Naive thymus-derived CD4-positive, alpha-beta T cell (primary cell): ENCODE measurements at regions of chr14 and their contacts with region 1.

Region 1: GRCh38 chr14:50860478-50861086 is 11.3 kb upstream of the ABHD12B start:
- DNase-seq: peak; percentile 80 to 90 (median 86)
- ATAC-seq: peak; percentile 90
- H3K4me3 ChIP-seq: peak overlapping the region; percentile 84
- H3K4me3 Mint-ChIP-seq: peak overlapping the region; percentile 89 to 95 (median 92)
- H3K27ac ChIP-seq: peak overlapping the region; percentile 56
- H3K27ac Mint-ChIP-seq: peak overlapping the region; percentile 83 to 95 (median 88)
- H3K4me1 ChIP-seq: peaks cover 7% of the 10 kb centered on the region in 2 donors
- H3K4me1 Mint-ChIP-seq: peaks cover 3 to 23% (median 11%) of the 10 kb centered on the region in 7 donors
- H3K27me3 ChIP-seq: no peaks in the 10 kb centered on the region
- H3K27me3 Mint-ChIP-seq: peaks cover 0 to 33% (median 2%) of the 10 kb centered on the region in 5 donors

Region 2: GRCh38 chr14:50321009-50321660 is 539.4 kb before region 1 on chr14:
- CTCF ChIA-PET with region 1: interaction called, 5 read pairs
- POLR2A ChIA-PET with region 1: no interaction called
- intact Hi-C with region 1: loop called (anchors 1 to 2 kb)
- DNase-seq: peak in 8 of 9 donors; percentile 52 to 83 (median 76)
- ATAC-seq: peak; percentile 99
- H3K4me3 ChIP-seq: peak overlapping the region; percentile 15
- H3K4me3 Mint-ChIP-seq: no peak overlapping the region
- H3K27ac ChIP-seq: peak overlapping the region; percentile 11
- H3K27ac Mint-ChIP-seq: no peak overlapping the region
- H3K4me1 ChIP-seq: peaks cover 0 to 4% of the 10 kb centered on the region in 2 donors
- H3K4me1 Mint-ChIP-seq: peaks cover 8 to 34% (median 27%) of the 10 kb centered on the region in 7 donors
- H3K27me3 ChIP-seq: no peaks in the 10 kb centered on the region
- H3K27me3 Mint-ChIP-seq: no peaks in the 10 kb centered on the region

Region 3: DNA sequence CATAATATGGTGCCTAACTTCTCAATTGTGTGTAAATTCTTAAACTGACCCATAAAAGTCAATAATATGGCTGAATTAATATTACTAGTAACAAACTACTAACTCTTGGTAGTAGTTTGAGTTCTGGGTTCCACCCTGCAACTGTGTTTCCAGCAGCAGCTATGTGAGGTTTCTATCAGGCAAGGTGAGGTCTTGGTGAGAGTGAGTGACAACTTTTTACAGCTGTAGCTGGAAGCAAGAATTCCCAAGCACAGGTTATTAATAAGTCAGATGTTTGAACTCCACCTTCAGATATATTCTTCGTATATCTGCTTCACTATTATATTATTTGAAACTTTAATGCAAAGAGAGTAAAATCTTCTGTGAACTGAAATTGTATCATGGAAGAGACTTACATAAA is 372.1 kb before region 1 on chr14:
- CTCF ChIA-PET with region 1: no interaction called
- POLR2A ChIA-PET with region 1: no interaction called
- intact Hi-C with region 1: no loop called
- DNase-seq: no peak
- ATAC-seq: no peak
- H3K4me3 ChIP-seq: no peak overlapping the region
- H3K4me3 Mint-ChIP-seq: no peak overlapping the region
- H3K27ac ChIP-seq: no peak overlapping the region
- H3K27ac Mint-ChIP-seq: no peak overlapping the region
- H3K4me1 ChIP-seq: no peaks in the 10 kb centered on the region
- H3K4me1 Mint-ChIP-seq: peaks cover 0 to 23% (median 7%) of the 10 kb centered on the region in 7 donors
- H3K27me3 ChIP-seq: no peaks in the 10 kb centered on the region
- H3K27me3 Mint-ChIP-seq: no peaks in the 10 kb centered on the region

Region 4: GRCh38 chr14:50599700-50600444 is 260.7 kb before region 1 on chr14:
- CTCF ChIA-PET with region 1: interaction called, 13 read pairs
- POLR2A ChIA-PET with region 1: no interaction called
- intact Hi-C with region 1: loop called (anchors 1 kb)
- DNase-seq: peak in 4 of 9 donors; percentile 7 to 21 (median 16)
- ATAC-seq: no peak
- H3K4me3 ChIP-seq: no peak overlapping the region
- H3K4me3 Mint-ChIP-seq: no peak overlapping the region
- H3K27ac ChIP-seq: no peak overlapping the region
- H3K27ac Mint-ChIP-seq: no peak overlapping the region
- H3K4me1 ChIP-seq: no peaks in the 10 kb centered on the region
- H3K4me1 Mint-ChIP-seq: peaks cover 0 to 4% (median 0%) of the 10 kb centered on the region in 7 donors
- H3K27me3 ChIP-seq: no peaks in the 10 kb centered on the region
- H3K27me3 Mint-ChIP-seq: peaks cover 0 to 3% (median 0%) of the 10 kb centered on the region in 5 donors

Region 5: GRCh38 chr14:50726372-50727107 is 134.0 kb before region 1 on chr14:
- CTCF ChIA-PET with region 1: interaction called, 4 read pairs
- POLR2A ChIA-PET with region 1: no interaction called
- intact Hi-C with region 1: loop called (anchors 1 to 2 kb)
- DNase-seq: peak in 5 of 9 donors; percentile 16 to 50 (median 37)
- ATAC-seq: peak; percentile 66
- H3K4me3 ChIP-seq: no peak overlapping the region
- H3K4me3 Mint-ChIP-seq: peak overlapping the region in 7 of 10 donors; percentile 0 to 87 (median 26)
- H3K27ac ChIP-seq: peak overlapping the region; percentile 32
- H3K27ac Mint-ChIP-seq: peak overlapping the region; percentile 57 to 97 (median 79)
- H3K4me1 ChIP-seq: peaks cover 10 to 19% of the 10 kb centered on the region in 2 donors
- H3K4me1 Mint-ChIP-seq: peaks cover 11 to 39% (median 29%) of the 10 kb centered on the region in 7 donors
- H3K27me3 ChIP-seq: no peaks in the 10 kb centered on the region
- H3K27me3 Mint-ChIP-seq: no peaks in the 10 kb centered on the region

Region 6: DNA sequence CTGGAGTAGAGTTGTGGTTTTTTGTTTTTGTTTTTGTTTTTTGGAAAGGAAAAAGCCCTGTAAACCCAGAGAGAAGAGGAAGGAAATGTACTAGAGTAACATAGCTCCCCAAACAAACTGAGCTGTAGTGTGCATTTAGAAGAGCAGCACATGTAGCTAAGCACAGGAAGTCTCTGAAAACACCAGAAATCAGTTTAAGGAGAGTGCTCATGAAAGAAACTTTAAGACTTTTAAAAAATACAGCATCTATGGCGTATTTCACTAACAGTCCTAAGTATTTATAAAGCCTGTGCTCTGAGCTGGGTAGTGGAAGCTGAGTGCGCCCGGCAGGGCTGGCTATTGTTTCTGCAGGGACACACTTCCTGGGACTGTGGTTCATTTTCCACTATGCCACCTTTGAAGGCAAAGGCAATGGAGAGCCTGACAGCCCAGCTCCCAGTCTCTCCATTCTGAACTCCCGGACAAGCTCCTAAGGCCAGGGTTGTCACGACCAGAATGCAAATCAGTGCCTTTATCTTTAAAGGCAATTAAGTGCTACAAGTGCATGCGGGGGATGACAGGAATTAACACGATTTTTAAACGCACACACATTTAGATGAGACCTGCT is 75.0 kb before region 1 on chr14:
- CTCF ChIA-PET with region 1: interaction called, 85 read pairs
- POLR2A ChIA-PET with region 1: interaction called, 18 read pairs
- intact Hi-C with region 1: loop called in 1 of 2 experiments (anchors 2 kb)
- DNase-seq: peak in 5 of 9 donors; percentile 22 to 50 (median 41)
- ATAC-seq: peak; percentile 60
- H3K4me3 ChIP-seq: peak overlapping the region; percentile 25
- H3K4me3 Mint-ChIP-seq: peak overlapping the region; percentile 50 to 83 (median 71)
- H3K27ac ChIP-seq: peak overlapping the region; percentile 63
- H3K27ac Mint-ChIP-seq: peak overlapping the region; percentile 83 to 98 (median 93)
- H3K4me1 ChIP-seq: peaks cover 60 to 68% of the 10 kb centered on the region in 2 donors
- H3K4me1 Mint-ChIP-seq: peaks cover 40 to 100% (median 88%) of the 10 kb centered on the region in 7 donors
- H3K27me3 ChIP-seq: no peaks in the 10 kb centered on the region
- H3K27me3 Mint-ChIP-seq: no peaks in the 10 kb centered on the region

Region 7: DNA sequence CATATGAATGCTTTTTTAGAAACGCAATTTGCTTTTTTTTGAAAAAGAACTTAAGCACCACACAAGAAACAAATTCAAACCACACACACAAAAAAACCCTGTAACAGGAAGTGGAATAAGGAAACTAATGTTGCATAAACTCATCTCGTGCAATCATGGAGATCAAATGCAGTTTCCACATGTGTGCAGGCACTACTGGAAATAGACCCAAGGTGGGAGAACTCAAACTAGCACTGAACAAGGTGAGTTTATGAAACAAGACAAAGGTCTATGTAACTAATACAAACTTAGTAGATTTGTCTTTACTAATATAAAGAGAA is 47.1 kb before region 1 on chr14:
- CTCF ChIA-PET with region 1: interaction called, 5 read pairs
- POLR2A ChIA-PET with region 1: interaction called, 6 read pairs
- intact Hi-C with region 1: loop called (anchors 1 to 10 kb)
- DNase-seq: peak in 7 of 9 donors; percentile 61 to 80 (median 75)
- ATAC-seq: peak; percentile 92
- H3K4me3 ChIP-seq: peak overlapping the region; percentile 38
- H3K4me3 Mint-ChIP-seq: peak overlapping the region; percentile 71 to 91 (median 86)
- H3K27ac ChIP-seq: peak overlapping the region; percentile 54
- H3K27ac Mint-ChIP-seq: peak overlapping the region; percentile 85 to 95 (median 93)
- H3K4me1 ChIP-seq: peaks cover 19 to 37% of the 10 kb centered on the region in 2 donors
- H3K4me1 Mint-ChIP-seq: peaks cover 42 to 81% (median 64%) of the 10 kb centered on the region in 7 donors
- H3K27me3 ChIP-seq: no peaks in the 10 kb centered on the region
- H3K27me3 Mint-ChIP-seq: no peaks in the 10 kb centered on the region

Region 8: GRCh38 chr14:51094901-51095853 is 234.6 kb after region 1 on chr14 and contains the start of gene TRIM9:
- CTCF ChIA-PET with region 1: no interaction called
- POLR2A ChIA-PET with region 1: no interaction called
- intact Hi-C with region 1: loop called in 1 of 2 experiments (anchors 10 kb)
- DNase-seq: peak; percentile 77 to 93 (median 91)
- ATAC-seq: peak; percentile 96
- H3K4me3 ChIP-seq: peak within 1 kb of the TSS; percentile 83
- H3K4me3 Mint-ChIP-seq: peak within 1 kb of the TSS; percentile 89 to 98 (median 95)
- H3K27ac ChIP-seq: peak within 1 kb of the TSS; percentile 58
- H3K27ac Mint-ChIP-seq: peak within 1 kb of the TSS; percentile 9 to 93 (median 87)
- H3K4me1 ChIP-seq: peaks cover 3 to 8% of the 10 kb centered on the region in 2 donors
- H3K4me1 Mint-ChIP-seq: peaks cover 4 to 18% (median 9%) of the 10 kb centered on the region in 7 donors
- H3K27me3 ChIP-seq: peaks cover 0 to 3% of the 10 kb centered on the region in 2 donors
- H3K27me3 Mint-ChIP-seq: peaks cover 12 to 70% (median 17%) of the 10 kb centered on the region in 5 donors
- total RNA-seq, gene TRIM9: 0.27 to 1.7 (median 0.39) TPM